Activated CD4-positive, alpha-beta T cell treated with anti-CD3 and anti-CD28 coated beads, Interleukin-2, amount 10 ng/mL, durations not matched to agents 24 days and 14 days (primary cell): ENCODE measurements at regions of chr10 and their contacts with region 1.

Region 1: GRCh38 chr10:88901206-88901983 is 21.4 kb downstream of the STAMBPL1 start:
- DNase-seq: no peak
- H3K4me3 Mint-ChIP-seq: peak overlapping the region; percentile 71
- H3K27ac Mint-ChIP-seq: peak overlapping the region; percentile 93
- H3K4me1 Mint-ChIP-seq: peaks cover 47% of the 10 kb centered on the region
- H3K27me3 Mint-ChIP-seq: no peaks in the 10 kb centered on the region

Region 2: DNA sequence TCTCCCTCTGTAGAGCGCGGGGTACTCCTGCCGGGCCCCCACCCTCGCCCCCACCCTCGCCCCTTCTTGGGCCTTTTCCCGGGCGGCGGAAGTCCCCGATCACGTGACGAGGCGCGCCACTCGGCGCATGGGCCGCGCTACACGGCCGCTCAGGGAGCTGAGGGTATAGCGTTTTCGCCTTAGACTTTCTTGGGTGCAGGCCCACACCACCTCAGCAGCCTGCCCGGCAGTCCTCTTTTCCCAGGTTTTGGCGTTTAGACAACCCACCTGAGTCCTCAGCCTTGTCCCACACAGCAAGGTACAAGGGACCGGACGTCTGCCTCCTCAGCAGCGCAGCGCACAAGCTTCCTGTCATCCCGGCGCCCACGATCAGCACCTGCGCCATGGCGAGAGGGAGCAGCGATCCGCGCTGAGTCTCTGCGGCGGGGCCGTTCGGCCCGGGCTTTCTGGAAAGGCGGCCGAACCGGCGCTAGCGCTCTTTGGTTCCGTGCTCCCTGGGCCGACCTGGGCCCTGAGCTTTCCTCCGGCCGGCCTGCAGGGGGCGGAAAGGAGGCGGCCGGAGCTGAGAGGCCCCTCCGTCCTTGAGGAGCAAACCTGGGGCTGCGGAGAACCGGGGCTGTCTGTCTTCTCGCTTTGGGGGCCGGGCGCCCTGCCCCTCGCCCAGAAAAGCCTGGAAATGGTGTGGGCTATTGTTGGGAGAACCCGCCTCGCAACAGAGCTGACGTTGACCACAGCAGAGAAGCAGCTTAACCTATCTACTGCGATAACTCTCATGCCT is 318.4 kb before region 1 on chr10 and contains the start of gene RNLS:
- intact Hi-C with region 1: no loop called
- DNase-seq: peak; percentile 88
- H3K4me3 Mint-ChIP-seq: peak within 1 kb of the TSS; percentile 87
- H3K27ac Mint-ChIP-seq: peak within 1 kb of the TSS; percentile 89
- H3K4me1 Mint-ChIP-seq: peaks cover 8% of the 10 kb centered on the region
- H3K27me3 Mint-ChIP-seq: peaks cover 19% of the 10 kb centered on the region
- total RNA-seq, gene RNLS: 2.1 and 2.4 TPM in 2 replicates

Region 3: DNA sequence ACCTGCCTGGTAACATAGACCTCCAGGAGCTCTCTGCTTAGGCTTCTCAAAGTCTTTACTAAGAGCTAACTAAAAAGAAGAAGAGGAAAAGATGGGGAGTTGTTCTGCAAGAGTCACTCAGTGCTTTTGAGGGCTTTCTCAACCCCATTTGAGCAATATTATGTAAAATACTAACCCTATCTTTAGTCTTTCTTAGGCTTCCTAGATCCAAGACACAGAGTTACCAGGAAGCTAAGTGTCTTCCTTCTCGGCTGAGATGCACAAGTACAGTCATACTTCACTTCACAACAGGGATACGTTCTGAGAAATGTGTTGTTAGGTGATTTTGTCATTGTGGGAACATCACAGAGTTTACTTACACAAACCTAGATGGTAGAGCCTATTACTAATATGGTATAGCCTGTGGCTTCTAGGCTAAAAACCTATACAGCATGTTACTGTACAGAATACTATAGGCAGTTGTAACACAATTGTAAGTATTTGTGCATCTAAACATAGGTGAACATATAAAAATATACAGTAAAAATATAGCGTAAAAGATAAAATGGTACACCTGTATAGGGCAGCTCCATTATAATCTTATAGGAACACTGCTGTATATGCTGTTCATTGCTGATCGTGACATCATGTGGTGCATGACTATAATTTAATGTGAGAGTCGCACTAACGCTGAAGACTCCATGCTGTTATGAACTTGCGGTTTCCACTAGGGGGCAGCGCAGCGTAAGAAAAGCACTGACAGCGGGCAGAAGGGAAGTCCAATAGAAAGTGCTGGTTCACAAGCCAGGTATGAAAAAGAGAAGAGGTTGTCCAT is 66.1 kb before region 1 on chr10:
- intact Hi-C with region 1: no loop called
- DNase-seq: peak; percentile 96
- H3K4me3 Mint-ChIP-seq: no peak overlapping the region
- H3K27ac Mint-ChIP-seq: no peak overlapping the region
- H3K4me1 Mint-ChIP-seq: peaks cover 31% of the 10 kb centered on the region
- H3K27me3 Mint-ChIP-seq: no peaks in the 10 kb centered on the region

Region 4: DNA sequence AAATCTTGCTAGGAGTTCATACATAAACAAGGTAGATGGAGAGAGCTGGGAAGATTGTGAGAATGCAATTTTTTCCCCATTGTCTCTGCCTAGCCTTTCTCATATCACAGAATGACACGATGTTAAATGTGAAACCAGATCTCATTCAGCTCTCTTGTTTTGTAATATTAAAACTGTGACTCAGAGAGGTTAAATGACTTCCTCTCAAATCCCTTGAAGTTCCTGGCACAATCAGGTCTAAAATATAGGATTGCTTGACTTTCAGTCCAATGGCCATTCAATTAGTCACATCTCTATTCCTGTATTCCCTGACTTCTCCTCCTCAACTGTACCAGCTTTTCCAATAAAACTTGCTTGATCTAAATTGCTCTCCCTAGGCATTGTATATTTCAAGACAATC is 52.9 kb before region 1 on chr10:
- intact Hi-C with region 1: loop called (anchors 1 kb)
- DNase-seq: no peak
- H3K4me3 Mint-ChIP-seq: peak overlapping the region; percentile 22
- H3K27ac Mint-ChIP-seq: peak overlapping the region; percentile 69
- H3K4me1 Mint-ChIP-seq: peaks cover 21% of the 10 kb centered on the region
- H3K27me3 Mint-ChIP-seq: peaks cover 15% of the 10 kb centered on the region

Region 5: GRCh38 chr10:88880282-88881076 is 20.9 kb before region 1 on chr10:
- intact Hi-C with region 1: loop called (anchors 1 kb)
- DNase-seq: peak; percentile 92
- H3K4me3 Mint-ChIP-seq: peak overlapping the region; percentile 96
- H3K27ac Mint-ChIP-seq: peak overlapping the region; percentile 99
- H3K4me1 Mint-ChIP-seq: peaks cover 59% of the 10 kb centered on the region
- H3K27me3 Mint-ChIP-seq: no peaks in the 10 kb centered on the region

Region 6: GRCh38 chr10:88886557-88886956 is 14.8 kb before region 1 on chr10:
- intact Hi-C with region 1: loop called (anchors 1 kb)
- DNase-seq: no peak
- H3K4me3 Mint-ChIP-seq: no peak overlapping the region
- H3K27ac Mint-ChIP-seq: no peak overlapping the region
- H3K4me1 Mint-ChIP-seq: peaks cover 65% of the 10 kb centered on the region
- H3K27me3 Mint-ChIP-seq: no peaks in the 10 kb centered on the region

Region 7: DNA sequence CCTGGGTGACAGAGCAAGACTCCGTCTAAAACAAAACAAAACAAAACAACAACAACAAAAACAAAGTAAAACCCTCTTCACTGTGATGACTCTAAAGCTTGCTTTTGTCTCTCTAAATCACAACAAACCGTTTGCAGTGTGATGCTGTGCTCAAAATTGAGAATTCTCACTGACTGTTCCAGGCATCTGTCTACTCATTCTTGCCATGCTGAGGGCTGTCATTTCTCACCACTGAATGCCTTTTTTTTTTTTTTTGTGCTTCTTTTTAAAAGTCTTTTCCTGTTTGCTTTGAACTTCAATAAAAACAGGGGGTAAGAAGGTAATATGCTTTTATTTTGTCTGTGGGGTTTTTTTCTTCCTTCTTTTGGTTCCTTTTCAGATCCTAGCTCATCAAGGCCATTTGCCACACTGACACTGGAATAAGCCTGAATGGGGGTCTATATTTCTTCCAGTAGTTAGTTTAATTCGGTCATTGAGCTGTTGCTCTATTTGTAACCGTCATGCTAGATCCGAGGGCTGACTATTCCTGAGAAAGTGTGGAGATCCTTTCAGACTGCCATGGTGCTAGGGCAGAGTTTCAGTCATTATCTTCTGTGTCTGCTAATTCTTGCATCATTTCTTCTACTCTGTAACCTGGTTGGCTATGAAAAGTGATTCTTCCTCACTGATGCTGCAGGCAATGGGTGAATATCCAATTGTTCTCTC is 99.8 kb after region 1 on chr10:
- intact Hi-C with region 1: loop called (anchors 2 kb)
- DNase-seq: peak; percentile 79
- H3K4me3 Mint-ChIP-seq: peak overlapping the region; percentile 82
- H3K27ac Mint-ChIP-seq: peak overlapping the region; percentile 91
- H3K4me1 Mint-ChIP-seq: peaks cover 60% of the 10 kb centered on the region
- H3K27me3 Mint-ChIP-seq: no peaks in the 10 kb centered on the region

Region 8: DNA sequence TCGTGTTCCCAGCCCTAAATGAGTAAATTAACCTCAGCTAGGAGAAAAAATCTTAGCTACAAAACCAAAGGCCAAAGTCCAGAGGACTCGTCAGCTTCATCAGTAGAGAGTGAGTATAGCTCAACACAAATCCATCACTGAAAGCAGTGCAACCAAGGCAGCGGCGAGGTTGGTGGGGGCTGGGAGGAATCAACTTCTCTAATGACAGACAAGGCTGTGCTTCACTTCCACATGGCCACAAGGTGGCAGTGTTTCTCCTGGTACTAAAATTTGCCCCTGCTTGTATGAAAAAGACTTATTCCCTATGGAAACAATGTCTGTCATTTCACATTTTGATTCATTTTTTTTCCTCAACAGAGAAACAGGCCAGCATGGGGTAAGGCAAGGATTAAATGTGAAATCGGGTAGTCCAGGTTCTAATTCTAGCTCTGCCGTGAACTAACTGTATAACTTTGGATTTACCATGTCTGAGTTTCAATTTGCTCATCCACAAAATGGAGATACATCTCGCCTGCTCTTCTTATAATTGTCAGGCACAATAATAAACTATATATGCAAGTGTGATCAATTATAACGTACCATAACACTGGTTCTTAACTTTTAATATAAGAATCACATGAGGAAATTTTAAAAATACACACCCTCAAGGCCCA is 128.5 kb after region 1 on chr10:
- intact Hi-C with region 1: loop called (anchors 1 kb)
- DNase-seq: peak; percentile 90
- H3K4me3 Mint-ChIP-seq: no peak overlapping the region
- H3K27ac Mint-ChIP-seq: no peak overlapping the region
- H3K4me1 Mint-ChIP-seq: peaks cover 33% of the 10 kb centered on the region
- H3K27me3 Mint-ChIP-seq: no peaks in the 10 kb centered on the region